ENCODE measurements at regions of chr1 and their contacts with region 1.

Region 1: GRCh38 chr1:183915625-183916510 is 110.9 kb downstream of the RGL1 start:
- DNase-seq: peak; percentile 78 to 88 (median 81)
- H3K4me3 ChIP-seq: no peak overlapping the region
- H3K4me3 Mint-ChIP-seq: peak overlapping the region in 2 of 8 donors; percentile 48 to 68
- H3K27ac ChIP-seq: no peak overlapping the region
- H3K27ac Mint-ChIP-seq: peak overlapping the region in 6 of 7 donors; percentile 41 to 84 (median 54)
- H3K4me1 ChIP-seq: peaks cover 5% of the 10 kb centered on the region
- H3K4me1 Mint-ChIP-seq: peaks cover 8 to 12% (median 10%) of the 10 kb centered on the region in 4 donors
- H3K27me3 ChIP-seq: no peaks in the 10 kb centered on the region
- H3K27me3 Mint-ChIP-seq: no peaks in the 10 kb centered on the region

Region 2: DNA sequence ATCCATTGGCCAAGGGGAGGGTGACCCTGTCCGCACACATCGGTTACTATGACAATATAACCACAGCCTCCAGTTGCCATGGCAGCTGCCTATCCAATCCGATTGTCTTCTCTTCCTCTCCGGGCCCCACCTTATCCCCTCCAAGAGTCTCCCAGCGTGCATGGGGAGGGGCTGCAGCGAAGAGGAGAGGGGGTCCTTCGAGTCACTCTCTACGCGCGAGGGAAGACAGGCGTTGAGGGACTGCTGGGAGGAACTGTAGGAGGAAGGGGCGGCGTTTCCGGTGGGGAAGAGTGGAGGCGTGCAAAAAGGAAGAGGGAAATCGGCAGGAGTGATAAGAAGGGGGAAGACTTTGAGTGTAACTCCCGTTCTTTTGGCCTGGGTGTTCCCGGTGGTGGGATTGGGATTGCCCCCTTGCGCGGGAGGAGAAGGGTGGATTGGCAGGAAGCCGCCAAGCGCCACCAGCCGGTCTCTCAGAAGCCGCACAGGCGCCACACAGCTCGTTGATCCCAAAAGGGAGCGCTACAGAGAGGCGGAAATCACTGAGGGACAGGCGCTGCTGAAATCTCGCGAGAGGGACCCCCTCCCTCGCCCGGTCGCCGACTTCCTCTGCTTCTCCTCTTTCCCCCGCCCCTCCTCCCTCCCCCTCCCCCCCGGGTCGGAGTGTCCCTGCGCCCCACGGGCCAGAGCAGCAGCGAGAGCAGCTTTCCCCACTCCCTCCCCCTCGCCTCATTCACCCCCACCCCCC is 444.0 kb before region 1 on chr1:
- CTCF ChIA-PET with region 1: interaction called, 3 read pairs
- POLR2A ChIA-PET with region 1: interaction called, 3 read pairs
- intact Hi-C with region 1: loop called (anchors 1 kb)
- DNase-seq: peak; percentile 96 to 99 (median 97)
- H3K4me3 ChIP-seq: peak overlapping the region; percentile 82 to 98
- H3K4me3 Mint-ChIP-seq: peak overlapping the region; percentile 90 to 99 (median 96)
- H3K27ac ChIP-seq: peak overlapping the region; percentile 91
- H3K27ac Mint-ChIP-seq: peak overlapping the region; percentile 99 to 100 (median 100)
- H3K4me1 ChIP-seq: peaks cover 39% of the 10 kb centered on the region
- H3K4me1 Mint-ChIP-seq: peaks cover 13 to 43% (median 19%) of the 10 kb centered on the region in 4 donors
- H3K27me3 ChIP-seq: no peaks in the 10 kb centered on the region
- H3K27me3 Mint-ChIP-seq: peaks cover 0 to 3% of the 10 kb centered on the region in 2 donors

Region 3: DNA sequence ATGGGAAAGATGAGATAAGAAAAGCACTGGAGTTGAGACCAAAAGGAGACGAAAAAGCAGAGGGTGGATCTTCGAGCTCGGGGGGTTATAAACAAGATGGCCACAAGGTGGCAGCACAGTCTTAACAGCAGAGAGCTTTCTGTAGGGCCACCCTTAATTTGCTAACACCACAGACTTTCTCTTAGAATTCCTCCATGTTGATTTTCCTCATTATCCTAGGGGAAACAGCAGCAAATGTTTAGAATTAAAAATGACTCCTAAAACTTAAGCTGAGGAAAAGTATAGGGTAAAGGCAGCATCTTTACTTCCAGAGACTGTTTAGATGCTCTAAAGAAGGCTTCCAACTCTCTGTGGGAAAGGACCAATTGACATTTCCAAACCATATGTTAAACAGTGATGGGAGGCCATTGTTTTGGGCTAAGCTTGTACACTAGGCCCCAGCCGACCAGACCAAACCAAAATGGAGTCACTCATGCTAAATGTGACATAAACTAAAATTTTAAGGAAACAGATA is 260.2 kb before region 1 on chr1:
- CTCF ChIA-PET with region 1: interaction called, 235 read pairs
- POLR2A ChIA-PET with region 1: interaction called, 11 read pairs
- intact Hi-C with region 1: loop called (anchors 1 kb)
- DNase-seq: peak; percentile 55 to 68 (median 64)
- H3K4me3 ChIP-seq: no peak overlapping the region
- H3K4me3 Mint-ChIP-seq: peak overlapping the region in 1 of 8 donors; percentile 62
- H3K27ac ChIP-seq: no peak overlapping the region
- H3K27ac Mint-ChIP-seq: peak overlapping the region in 1 of 7 donors; percentile 44
- H3K4me1 ChIP-seq: peaks cover 31% of the 10 kb centered on the region
- H3K4me1 Mint-ChIP-seq: peaks cover 29 to 41% (median 32%) of the 10 kb centered on the region in 4 donors
- H3K27me3 ChIP-seq: no peaks in the 10 kb centered on the region
- H3K27me3 Mint-ChIP-seq: peaks cover 2% of the 10 kb centered on the region in 2 donors

Region 4: DNA sequence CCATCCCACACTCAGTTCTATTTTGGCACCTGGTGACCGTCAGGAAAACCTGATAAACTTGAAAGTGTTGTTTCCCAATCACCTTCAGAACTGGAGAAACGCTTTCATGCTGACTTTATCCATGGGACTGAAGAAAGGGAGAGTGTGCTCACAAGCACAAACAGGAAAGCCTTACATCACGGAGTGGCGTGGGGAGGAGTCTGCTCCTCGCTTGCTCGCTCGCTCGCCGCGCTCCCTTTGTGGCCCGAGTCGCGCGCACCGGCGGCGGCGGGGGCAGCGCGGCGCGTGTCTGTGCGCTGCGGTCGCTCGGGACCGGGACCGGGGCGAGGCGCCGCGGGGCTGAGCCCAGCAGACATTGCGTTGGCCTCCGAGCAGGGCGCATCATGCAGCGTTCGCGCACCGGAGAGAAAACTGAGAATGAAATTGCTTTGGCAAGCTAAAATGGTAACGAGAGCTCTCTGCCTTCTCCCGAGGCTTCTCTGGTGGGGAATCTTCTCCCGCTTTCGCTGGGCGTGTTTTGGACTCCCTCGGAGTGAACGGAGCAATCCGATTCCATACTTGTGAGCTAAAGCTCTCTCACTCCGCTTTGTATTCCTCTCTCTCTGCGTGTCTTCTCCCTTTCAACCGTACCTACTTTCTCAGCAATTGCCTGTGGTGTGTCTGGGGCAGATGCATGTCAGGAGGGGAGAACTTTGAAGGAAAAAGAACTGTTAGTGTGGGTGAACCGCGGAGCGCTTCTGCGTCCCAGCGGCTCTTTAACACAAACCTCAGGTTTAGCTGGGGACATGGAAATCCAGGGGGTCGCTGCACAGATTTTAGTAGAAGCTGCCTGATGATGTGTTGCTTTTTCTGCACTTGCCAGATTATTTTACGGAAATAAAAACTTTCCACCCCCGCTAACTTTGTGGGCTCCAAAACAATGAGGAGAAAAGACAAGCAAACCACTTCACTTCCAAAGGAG is 110.7 kb before region 1 on chr1 and contains the start of gene RGL1:
- CTCF ChIA-PET with region 1: interaction called, 11 read pairs
- POLR2A ChIA-PET with region 1: no interaction called
- intact Hi-C with region 1: no loop called
- DNase-seq: peak in 4 of 5 donors; percentile 5 to 21 (median 16)
- H3K4me3 ChIP-seq: peak within 1 kb of the TSS in 1 of 2 donors; percentile 55
- H3K4me3 Mint-ChIP-seq: peak within 1 kb of the TSS; percentile 85 to 95 (median 91)
- H3K27ac ChIP-seq: no peak within 1 kb of the TSS
- H3K27ac Mint-ChIP-seq: peak within 1 kb of the TSS in 4 of 7 donors; percentile 2 to 78 (median 10)
- H3K4me1 ChIP-seq: peaks cover 8% of the 10 kb centered on the region
- H3K4me1 Mint-ChIP-seq: peaks cover 5 to 7% (median 7%) of the 10 kb centered on the region in 4 donors
- H3K27me3 ChIP-seq: no peaks in the 10 kb centered on the region
- H3K27me3 Mint-ChIP-seq: peaks cover 6 to 10% of the 10 kb centered on the region in 2 donors
- total RNA-seq, gene RGL1: 5.1 to 5.3 TPM

Region 5: GRCh38 chr1:183864611-183865010 is 51.3 kb before region 1 on chr1:
- CTCF ChIA-PET with region 1: no interaction called
- POLR2A ChIA-PET with region 1: no interaction called
- intact Hi-C with region 1: no loop called
- DNase-seq: no peak
- H3K4me3 ChIP-seq: no peak overlapping the region
- H3K4me3 Mint-ChIP-seq: no peak overlapping the region
- H3K27ac ChIP-seq: no peak overlapping the region
- H3K27ac Mint-ChIP-seq: peak overlapping the region in 1 of 7 donors; percentile 67
- H3K4me1 ChIP-seq: no peaks in the 10 kb centered on the region
- H3K4me1 Mint-ChIP-seq: no peaks in the 10 kb centered on the region
- H3K27me3 ChIP-seq: no peaks in the 10 kb centered on the region
- H3K27me3 Mint-ChIP-seq: no peaks in the 10 kb centered on the region

Region 6: DNA sequence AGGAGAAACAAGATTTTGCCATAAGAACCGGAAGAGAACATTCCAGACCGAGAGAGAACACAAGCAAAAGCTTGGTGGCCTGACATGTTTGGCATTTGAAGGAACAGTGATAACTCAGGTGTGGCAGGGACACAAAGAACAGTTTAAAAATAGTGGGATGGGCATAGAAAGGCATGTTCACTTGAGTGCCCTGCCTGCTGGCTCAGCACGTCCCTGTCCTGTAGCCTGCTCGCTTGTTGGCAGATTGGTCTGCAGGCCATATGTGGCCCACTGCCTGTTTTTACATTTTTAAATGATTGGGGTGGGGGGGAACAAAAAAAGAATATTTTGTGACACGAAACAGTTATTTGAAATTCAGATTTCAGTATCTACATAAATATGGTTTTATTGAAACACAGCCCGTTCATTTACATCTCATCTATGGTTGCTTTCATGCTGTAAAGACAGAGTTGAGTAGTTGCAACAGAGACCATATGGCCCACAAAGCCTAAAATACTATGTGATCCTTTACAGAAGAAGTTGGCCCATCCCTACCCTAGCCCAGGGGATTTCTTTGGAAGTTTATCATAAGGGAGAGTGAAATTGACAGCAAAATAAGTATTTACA is 10.3 kb before region 1 on chr1:
- CTCF ChIA-PET with region 1: interaction called, 15 read pairs
- POLR2A ChIA-PET with region 1: no interaction called
- intact Hi-C with region 1: no loop called
- DNase-seq: no peak
- H3K4me3 ChIP-seq: no peak overlapping the region
- H3K4me3 Mint-ChIP-seq: no peak overlapping the region
- H3K27ac ChIP-seq: no peak overlapping the region
- H3K27ac Mint-ChIP-seq: no peak overlapping the region
- H3K4me1 ChIP-seq: no peaks in the 10 kb centered on the region
- H3K4me1 Mint-ChIP-seq: peaks cover 0 to 9% (median 0%) of the 10 kb centered on the region in 4 donors
- H3K27me3 ChIP-seq: no peaks in the 10 kb centered on the region
- H3K27me3 Mint-ChIP-seq: no peaks in the 10 kb centered on the region

Region 7: GRCh38 chr1:184051485-184052193 is 135.8 kb after region 1 on chr1 and contains the start of gene TSEN15:
- CTCF ChIA-PET with region 1: interaction called, 11 read pairs
- POLR2A ChIA-PET with region 1: interaction called, 13 read pairs
- intact Hi-C with region 1: no loop called
- DNase-seq: peak; percentile 66 to 74 (median 72)
- H3K4me3 ChIP-seq: peak within 1 kb of the TSS; percentile 88 to 95
- H3K4me3 Mint-ChIP-seq: peak within 1 kb of the TSS; percentile 98 to 99 (median 99)
- H3K27ac ChIP-seq: peak within 1 kb of the TSS; percentile 67
- H3K27ac Mint-ChIP-seq: peak within 1 kb of the TSS; percentile 89 to 98 (median 96)
- H3K4me1 ChIP-seq: peaks cover 33% of the 10 kb centered on the region
- H3K4me1 Mint-ChIP-seq: peaks cover 26 to 47% (median 37%) of the 10 kb centered on the region in 4 donors
- H3K27me3 ChIP-seq: no peaks in the 10 kb centered on the region
- H3K27me3 Mint-ChIP-seq: peaks cover 0 to 5% of the 10 kb centered on the region in 2 donors
- total RNA-seq, gene TSEN15: 34.0 to 42.2 TPM